CD8-positive, alpha-beta memory T cell (primary cell): ENCODE measurements at regions of chr1 and their contacts with region 1.

Region 1: GRCh38 chr1:28091043-28091781 is 2.8 kb upstream of the EYA3 start:
- DNase-seq: peak; percentile 67 to 83 (median 70)
- H3K4me3 ChIP-seq: no peak overlapping the region
- H3K4me3 Mint-ChIP-seq: peak overlapping the region; percentile 34 to 90 (median 60)
- H3K27ac ChIP-seq: no peak overlapping the region
- H3K27ac Mint-ChIP-seq: peak overlapping the region; percentile 8 to 83 (median 78)
- H3K4me1 ChIP-seq: peaks cover 17% of the 10 kb centered on the region
- H3K4me1 Mint-ChIP-seq: peaks cover 24 to 38% (median 32%) of the 10 kb centered on the region in 3 donors
- H3K27me3 ChIP-seq: no peaks in the 10 kb centered on the region
- H3K27me3 Mint-ChIP-seq: peaks cover 1 to 2% of the 10 kb centered on the region in 2 donors

Region 2: GRCh38 chr1:28110552-28110951 is 19.3 kb after region 1 on chr1:
- CTCF ChIA-PET with region 1: interaction called, 11 read pairs
- POLR2A ChIA-PET with region 1: no interaction called
- DNase-seq: no peak
- H3K4me3 ChIP-seq: no peak overlapping the region
- H3K4me3 Mint-ChIP-seq: no peak overlapping the region
- H3K27ac ChIP-seq: no peak overlapping the region
- H3K27ac Mint-ChIP-seq: no peak overlapping the region
- H3K4me1 ChIP-seq: peaks cover 9% of the 10 kb centered on the region
- H3K4me1 Mint-ChIP-seq: peaks cover 6 to 10% (median 6%) of the 10 kb centered on the region in 3 donors
- H3K27me3 ChIP-seq: no peaks in the 10 kb centered on the region
- H3K27me3 Mint-ChIP-seq: no peaks in the 10 kb centered on the region

Region 3: DNA sequence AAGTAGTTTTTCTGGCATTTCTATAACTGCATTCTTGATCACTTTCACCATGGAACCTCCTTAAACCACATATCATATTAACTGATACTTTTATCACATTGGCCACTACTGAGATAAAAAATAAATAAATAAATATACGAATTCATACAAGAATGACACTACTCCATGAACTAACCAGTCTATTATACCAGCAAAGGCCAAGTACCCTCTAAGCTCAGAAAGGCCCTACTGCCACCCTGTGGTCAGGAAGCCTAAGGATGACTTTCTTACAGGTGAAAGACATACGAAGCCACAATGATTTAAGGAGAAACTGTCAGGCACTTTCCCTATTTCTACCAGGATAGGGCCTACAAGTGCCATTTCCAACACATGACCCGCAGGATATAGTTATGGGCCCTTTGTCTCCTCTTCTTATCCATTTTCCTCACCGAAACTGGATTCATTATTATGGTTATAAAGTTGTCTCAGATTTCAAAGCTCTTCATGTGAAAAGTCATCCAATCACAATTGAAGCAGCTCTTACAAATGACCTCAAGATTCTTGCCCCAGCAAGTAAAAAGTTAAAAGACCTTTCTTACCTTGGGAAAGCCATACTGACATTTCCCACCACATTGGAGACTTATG is 117.7 kb after region 1 on chr1:
- CTCF ChIA-PET with region 1: interaction called, 49 read pairs
- POLR2A ChIA-PET with region 1: interaction called, 3 read pairs
- DNase-seq: peak; percentile 36 to 76 (median 50)
- H3K4me3 ChIP-seq: no peak overlapping the region
- H3K4me3 Mint-ChIP-seq: no peak overlapping the region
- H3K27ac ChIP-seq: no peak overlapping the region
- H3K27ac Mint-ChIP-seq: peak overlapping the region in 4 of 8 donors; percentile 1 to 80 (median 19)
- H3K4me1 ChIP-seq: no peaks in the 10 kb centered on the region
- H3K4me1 Mint-ChIP-seq: peaks cover 8 to 13% (median 12%) of the 10 kb centered on the region in 3 donors
- H3K27me3 ChIP-seq: no peaks in the 10 kb centered on the region
- H3K27me3 Mint-ChIP-seq: no peaks in the 10 kb centered on the region

Region 4: GRCh38 chr1:28470146-28470545 is 378.9 kb after region 1 on chr1:
- CTCF ChIA-PET with region 1: no interaction called
- POLR2A ChIA-PET with region 1: no interaction called
- DNase-seq: no peak
- H3K4me3 ChIP-seq: no peak overlapping the region
- H3K4me3 Mint-ChIP-seq: no peak overlapping the region
- H3K27ac ChIP-seq: no peak overlapping the region
- H3K27ac Mint-ChIP-seq: no peak overlapping the region
- H3K4me1 ChIP-seq: no peaks in the 10 kb centered on the region
- H3K4me1 Mint-ChIP-seq: peaks cover 0 to 5% (median 4%) of the 10 kb centered on the region in 3 donors
- H3K27me3 ChIP-seq: no peaks in the 10 kb centered on the region
- H3K27me3 Mint-ChIP-seq: no peaks in the 10 kb centered on the region